ENCODE measurements at regions of chr7 and their contacts with region 1.

Region 1: GRCh38 chr7:101138213-101138870 is 11.4 kb downstream of the SERPINE1 start:
- DNase-seq: peak; percentile 46 to 91 (median 77)

Region 2: DNA sequence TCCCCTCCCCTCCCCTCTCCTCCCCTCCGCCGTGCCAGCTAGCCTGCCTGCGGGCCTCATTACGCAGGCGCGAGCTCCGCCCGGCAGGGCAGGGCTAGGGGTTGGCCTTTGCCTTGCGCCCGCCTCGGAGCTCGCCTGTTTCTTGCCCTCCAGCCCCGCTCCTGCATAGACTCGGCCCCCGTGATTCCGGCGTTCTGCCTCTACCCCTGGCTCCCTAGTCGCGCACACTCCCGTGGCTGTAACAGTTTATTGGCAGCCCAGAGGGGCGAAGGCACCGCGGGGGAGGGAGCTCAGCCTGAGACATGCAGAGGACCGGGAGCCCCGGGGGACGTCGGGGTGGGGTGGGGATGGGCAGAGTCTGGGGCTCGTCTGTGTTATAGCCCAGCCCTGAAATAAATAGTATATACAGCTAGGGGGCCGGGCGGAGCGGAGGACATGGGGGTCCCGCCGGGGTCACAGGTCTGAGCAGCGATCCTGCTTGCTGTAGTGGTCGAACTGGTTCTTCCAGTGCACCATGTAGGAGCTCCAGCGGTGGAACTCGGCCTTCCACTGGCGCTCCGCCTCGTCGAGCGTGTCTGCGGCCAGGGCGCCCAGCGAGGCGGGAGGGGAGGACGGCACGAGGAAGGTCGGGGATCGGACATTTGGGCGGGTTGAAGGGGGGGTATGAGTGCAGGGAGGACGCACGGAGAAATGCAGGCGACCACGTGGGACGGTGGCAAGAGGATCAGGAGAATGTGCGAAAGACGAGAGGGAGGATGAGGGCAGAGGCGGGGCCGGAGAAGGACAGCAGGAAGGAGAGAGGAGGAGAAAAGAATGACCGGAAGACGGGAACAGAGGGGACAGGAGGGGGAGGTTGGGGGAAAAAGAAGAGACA is 248.3 kb before region 1 on chr7:
- intact Hi-C with region 1: loop called (anchors 10 kb)
- DNase-seq: peak; percentile 86 to 99 (median 96)

Region 3: DNA sequence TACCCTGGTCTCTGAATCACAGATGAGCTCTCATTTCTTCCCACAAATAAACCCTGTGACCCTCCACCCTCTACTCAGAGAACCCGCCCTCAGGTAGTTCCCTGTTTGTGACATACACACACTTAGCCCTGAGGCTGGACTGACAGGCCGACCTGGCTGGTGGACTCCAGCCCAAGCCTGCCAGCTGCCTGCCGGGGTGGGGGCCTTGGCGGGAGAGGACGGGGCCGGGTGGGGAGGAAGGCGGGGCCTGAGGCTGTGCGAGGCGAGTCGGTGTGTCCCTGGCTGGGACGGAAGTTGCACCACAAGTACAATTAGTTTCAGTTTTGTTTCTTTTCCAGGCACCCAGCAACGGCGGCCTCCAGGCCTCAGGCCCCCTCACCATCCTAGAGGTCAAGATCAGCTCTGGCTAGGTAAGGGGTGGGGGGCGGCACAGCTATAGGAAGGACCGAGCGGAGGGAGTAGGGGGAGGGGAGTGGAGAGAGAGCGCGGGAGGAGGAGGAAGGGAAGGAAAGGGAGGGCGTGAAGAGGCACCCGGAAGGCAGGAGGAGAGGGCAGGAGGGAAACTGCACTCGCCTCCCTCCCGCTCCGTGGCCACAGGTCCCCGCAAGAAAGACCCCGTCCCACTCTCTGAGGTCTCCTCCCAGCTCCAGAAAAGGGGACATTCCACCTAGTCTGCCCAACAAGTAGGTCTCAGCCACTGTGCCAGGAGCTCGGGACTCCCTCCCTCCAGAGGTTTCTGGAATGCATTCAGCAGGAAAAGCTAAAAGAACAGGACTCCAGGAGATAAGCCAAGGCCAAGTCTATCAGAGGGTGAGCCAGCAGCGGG is 53.0 kb before region 1 on chr7 and contains the start of gene TRIM56:
- intact Hi-C with region 1: loop called (anchors 5 kb)
- DNase-seq: peak; percentile 49 to 86 (median 74)

Region 4: DNA sequence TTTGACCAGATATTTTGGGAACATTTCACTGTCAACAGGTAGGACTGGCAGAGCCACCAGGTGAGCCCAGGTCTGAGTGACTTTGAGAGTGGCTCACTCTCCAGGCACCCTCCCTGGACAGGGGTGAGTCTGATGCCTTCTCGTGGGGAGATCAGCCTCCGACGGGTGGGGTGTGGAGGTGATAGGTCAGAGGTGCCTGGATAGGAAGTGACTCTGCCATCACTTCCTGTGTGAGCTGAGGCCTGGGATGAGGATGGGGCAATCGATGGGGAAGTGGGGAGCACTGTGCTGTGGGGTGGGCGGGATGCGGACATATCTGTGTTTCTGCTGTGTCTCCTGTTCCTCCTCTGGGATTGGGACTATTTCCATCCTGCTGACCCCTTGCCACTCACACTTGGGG is 148.7 kb after region 1 on chr7:
- intact Hi-C with region 1: loop called (anchors 5 kb)
- DNase-seq: no peak

Region 5: DNA sequence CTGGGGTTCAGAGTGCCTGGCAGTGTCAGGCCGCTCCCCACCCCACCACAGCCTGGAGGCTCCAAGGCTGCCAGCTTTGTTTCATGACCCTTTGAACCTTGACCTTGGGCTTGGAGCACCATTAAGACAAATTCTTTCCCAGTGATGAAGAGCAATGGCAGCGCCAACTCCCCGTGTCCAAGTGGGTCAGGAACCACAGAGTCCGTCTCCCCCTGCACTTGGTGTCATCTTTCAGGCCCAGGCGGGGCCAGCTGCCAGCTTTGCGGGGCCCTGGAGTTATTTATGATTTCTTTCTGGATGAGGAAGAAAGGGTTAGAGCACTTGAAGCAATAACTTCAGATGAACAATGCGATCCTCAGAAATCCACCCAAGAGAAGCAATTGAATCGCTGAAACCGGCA is 380.0 kb after region 1 on chr7:
- intact Hi-C with region 1: no loop called
- DNase-seq: no peak